GM12878 (cell line): ENCODE measurements at regions of chr1 and their contacts with region 1.

Region 1: DNA sequence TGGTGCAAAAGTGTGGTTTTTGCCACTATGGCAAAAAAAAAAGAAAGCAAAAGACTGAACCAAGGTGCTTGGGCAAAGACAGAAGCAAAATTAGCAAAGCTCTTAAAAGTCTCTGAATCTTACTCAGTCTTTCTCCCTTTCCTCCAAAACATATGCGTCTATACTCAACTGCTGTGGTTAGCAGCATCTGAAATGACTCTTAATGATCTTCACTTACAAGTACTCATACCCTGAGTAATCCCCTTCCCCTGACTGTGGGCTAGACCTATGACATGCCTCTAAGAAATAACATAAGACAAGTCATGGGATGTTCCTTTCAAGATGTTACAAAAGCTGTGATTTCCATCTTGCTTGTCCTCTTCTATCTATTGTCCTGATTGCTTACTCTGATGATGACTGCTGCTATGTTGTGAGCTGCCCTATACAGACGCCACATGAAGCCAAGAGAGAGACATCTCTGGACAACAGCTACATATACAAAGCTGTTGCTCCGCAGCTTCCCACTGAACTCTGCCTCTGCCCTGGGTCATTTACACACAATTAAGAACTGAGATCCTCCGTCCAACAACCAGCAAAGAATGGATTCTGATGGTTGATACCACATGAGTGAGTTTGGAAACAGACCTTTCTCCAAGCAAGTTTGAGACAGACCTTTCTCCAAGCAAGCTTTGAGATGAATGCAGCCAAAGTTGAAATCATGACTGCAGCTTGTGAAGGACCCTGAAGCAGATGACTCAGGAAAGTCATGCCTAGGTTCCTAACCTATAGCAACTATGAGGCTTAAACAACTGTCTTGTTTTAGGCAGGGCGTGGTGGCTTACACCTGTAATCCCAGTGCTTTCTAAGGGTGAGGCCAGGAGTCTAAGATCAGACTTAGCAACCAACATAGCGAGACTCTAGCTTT is 55.2 kb downstream of the PUM1 start:
- DNase-seq: peak; percentile 44
- ATAC-seq: peak; percentile 83
- H3K4me3 ChIP-seq: no peak overlapping the region
- H3K27ac ChIP-seq: peak overlapping the region; percentile 43
- H3K4me1 ChIP-seq: peaks cover 32% of the 10 kb centered on the region
- H3K27me3 ChIP-seq: no peaks in the 10 kb centered on the region
- CTCF ChIP-seq: no peak
- EP300 ChIP-seq: peak in 1 of 2 experiments; percentile 43; a peak in 1 of 4 replicates
- POLR2A ChIP-seq: no peak
- RAD21 ChIP-seq: no peak

Region 2: GRCh38 chr1:30575066-30575465 is 435.3 kb before region 1 on chr1:
- CTCF ChIA-PET with region 1: no interaction called
- POLR2A ChIA-PET with region 1: no interaction called
- RAD21 ChIA-PET with region 1: no interaction called
- SMC1A ChIA-PET with region 1: no interaction called
- in situ Hi-C with region 1: no loop called
- intact Hi-C with region 1: no loop called
- DNase-seq: no peak
- ATAC-seq: no peak
- H3K4me3 ChIP-seq: no peak overlapping the region
- H3K27ac ChIP-seq: no peak overlapping the region
- H3K4me1 ChIP-seq: no peaks in the 10 kb centered on the region
- H3K27me3 ChIP-seq: peaks cover 0 to 2% of the 10 kb centered on the region in 2 experiments; a peak in 2 of 4 replicates
- CTCF ChIP-seq: no peak
- EP300 ChIP-seq: no peak
- POLR2A ChIP-seq: no peak
- RAD21 ChIP-seq: no peak

Region 3: DNA sequence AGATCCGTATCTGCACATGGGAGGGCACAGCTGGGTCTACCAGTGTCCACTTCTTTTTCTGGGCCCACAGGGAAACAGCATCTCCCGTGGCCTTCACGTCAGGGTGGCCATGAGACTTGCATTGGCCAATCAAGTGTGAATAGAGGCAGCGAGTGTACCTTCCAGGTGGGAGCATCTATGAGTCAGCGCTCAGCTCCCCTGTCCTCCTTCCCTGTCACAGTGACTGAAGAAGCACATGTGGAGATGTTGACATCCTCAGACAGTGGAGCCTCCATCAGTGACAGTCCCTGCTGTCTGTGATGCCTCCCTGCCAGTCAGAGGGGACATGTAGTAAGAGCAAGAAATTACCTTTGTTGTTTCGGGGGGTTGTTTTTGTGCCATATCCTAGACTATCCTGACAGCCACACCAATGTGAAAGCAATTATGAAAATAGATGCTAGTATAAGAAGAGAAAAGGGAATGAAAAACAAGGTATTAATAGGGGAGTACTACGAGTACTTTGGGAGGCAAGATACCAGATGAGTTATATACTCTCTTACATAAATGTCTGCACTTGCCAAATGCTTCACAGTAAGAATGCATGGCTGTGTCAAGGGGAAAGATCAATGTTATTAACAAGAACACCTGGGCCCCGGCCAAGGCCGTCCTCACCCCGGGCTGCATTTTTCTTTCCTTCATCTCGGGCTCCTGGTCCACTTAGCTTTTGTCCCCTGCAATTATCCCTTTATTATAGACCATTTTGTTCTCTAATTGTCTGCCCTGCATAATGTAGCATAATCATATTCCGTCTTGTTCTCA is 373.0 kb before region 1 on chr1:
- CTCF ChIA-PET with region 1: no interaction called
- POLR2A ChIA-PET with region 1: no interaction called
- RAD21 ChIA-PET with region 1: no interaction called
- SMC1A ChIA-PET with region 1: no interaction called
- in situ Hi-C with region 1: no loop called
- intact Hi-C with region 1: no loop called
- DNase-seq: no peak
- ATAC-seq: no peak
- H3K4me3 ChIP-seq: no peak overlapping the region
- H3K27ac ChIP-seq: no peak overlapping the region
- H3K4me1 ChIP-seq: no peaks in the 10 kb centered on the region
- H3K27me3 ChIP-seq: no peaks in the 10 kb centered on the region; a peak in 2 of 4 replicates
- CTCF ChIP-seq: no peak
- EP300 ChIP-seq: no peak
- POLR2A ChIP-seq: no peak
- RAD21 ChIP-seq: no peak

Region 4: DNA sequence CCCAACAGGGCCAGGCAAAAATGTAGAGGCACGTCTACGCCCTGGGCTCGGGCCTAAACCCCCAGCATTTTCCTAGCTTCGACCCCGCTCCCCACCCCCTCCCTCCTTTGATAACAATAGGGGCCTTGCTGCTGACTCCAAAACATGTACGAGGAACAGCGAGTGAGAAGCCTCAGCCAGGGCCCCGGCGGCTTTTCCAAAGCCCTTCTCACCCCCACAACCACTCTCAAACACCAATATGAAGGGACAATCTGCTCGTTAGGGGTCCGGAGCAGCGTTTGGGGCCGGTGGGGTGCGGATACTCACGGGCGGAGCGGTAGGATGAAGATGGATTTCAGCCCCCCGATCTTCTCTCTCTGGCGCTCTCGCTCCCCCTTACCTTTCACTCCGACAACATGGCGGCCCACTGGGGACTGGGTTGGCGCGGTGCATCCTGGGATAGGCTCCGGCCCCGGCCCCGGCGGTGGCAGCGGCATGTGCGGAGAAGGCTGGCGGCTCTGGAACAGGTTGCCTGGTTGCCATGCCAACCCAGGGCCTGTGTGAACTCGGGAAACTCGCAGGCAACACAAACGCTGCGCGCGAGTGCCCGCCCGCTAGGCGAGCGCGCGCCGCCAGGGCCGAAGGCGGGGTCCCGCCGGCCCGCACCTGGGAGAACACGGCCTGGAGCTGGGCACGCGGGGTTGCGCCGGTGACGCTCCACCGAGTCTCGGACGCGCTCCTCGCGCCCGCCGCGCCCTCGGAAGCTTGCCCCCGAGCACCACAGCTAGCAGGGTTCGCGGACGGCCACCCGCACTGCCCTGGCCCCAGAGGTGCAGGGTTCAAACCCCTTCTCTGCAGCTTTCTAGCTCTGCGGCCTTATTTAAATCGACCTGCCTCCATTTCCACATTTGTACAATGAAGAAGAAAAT is 55.2 kb after region 1 on chr1 and contains the start of gene PUM1:
- CTCF ChIA-PET with region 1: no interaction called
- POLR2A ChIA-PET with region 1: no interaction called
- RAD21 ChIA-PET with region 1: interaction called, 3 read pairs
- SMC1A ChIA-PET with region 1: interaction called, 11 read pairs
- in situ Hi-C with region 1: no loop called
- intact Hi-C with region 1: loop called (anchors 5 kb)
- DNase-seq: peak; percentile 85
- ATAC-seq: peak; percentile 96
- H3K4me3 ChIP-seq: peak within 1 kb of the TSS; percentile 99
- H3K27ac ChIP-seq: peak within 1 kb of the TSS; percentile 96
- H3K4me1 ChIP-seq: no peaks in the 10 kb centered on the region
- H3K27me3 ChIP-seq: no peaks in the 10 kb centered on the region
- CTCF ChIP-seq: no peak; a peak in 1 of 6 replicates
- EP300 ChIP-seq: peak in 1 of 2 experiments; percentile 60; a peak in 2 of 4 replicates
- POLR2A ChIP-seq: peak; percentile 96
- RAD21 ChIP-seq: no peak
- polyA plus RNA-seq, gene PUM1: 21.4 to 27.4 TPM